HEK293T (cell line): ENCODE measurements at regions of chr11 and their contacts with region 1.

Region 1: DNA sequence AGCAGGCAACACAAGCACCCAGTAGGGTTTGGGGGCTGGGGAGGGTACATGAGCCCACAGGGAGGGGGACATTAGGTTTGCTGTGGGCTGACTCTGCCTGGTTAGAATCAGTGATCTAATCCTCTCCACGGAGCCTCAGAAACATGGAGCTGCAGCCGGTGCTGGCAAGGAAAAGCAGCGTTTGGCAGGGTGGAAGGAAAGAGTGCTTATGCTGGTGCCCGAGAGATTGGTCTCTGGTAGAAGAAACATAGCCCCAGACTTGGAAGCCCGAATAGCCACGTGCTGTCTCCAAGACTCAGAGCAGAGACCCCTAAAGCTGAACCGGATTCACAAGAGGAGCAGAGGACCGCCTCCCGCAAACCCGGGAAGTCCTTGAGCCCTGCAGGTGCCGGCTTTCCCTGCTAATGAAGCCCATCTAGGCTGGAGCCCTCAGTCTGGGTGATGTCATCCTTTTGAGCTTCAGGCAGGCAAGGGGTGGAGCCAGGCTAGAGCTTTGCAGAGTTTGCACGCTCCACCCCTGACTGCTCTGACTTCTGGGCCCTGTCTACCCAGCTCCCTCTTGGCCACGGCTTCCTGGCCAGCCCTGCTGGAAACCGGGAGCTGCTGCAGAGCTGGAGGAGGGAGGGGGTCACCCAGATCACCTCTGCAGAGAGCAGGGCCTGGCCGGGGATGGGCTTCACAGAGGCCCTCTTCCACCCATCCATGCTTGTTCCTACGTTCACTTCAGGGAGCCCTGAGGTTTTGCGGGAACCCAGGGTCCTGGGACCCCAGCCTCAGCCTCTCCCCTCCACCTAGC is 35.0 kb upstream of the JAM3 start:
- DNase-seq: peak; percentile 86

Region 2: DNA sequence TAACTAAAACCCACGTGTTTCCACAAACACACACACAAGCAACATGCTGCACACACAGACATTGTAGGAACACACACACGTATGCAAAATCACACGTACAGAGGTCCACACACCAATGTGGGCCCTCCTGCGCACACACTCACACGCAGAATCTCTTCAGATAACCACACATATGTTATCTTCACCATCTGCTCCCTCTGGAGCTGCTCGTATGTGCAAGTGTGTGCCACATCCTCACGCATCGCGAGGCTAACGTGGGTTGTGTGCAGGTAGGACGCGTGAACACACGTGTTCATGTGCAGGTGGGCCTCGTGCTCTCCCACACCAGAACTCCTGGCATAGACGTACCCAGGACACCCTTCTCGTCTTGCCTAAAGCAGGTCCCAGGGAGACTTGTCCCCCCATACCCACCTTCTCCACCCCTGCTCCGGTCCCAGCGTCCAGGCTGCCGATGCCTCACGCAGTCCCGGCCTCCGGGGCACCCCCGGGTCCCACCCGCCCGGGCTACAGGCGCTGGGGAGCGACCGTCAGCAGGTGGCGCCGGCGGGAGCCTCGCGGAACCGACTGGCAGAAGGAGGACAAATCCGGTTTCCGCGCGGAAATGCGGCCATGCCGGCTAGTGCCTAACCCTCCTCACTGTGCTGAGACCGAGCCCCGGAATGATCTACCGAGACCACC is 66.8 kb before region 1 on chr11:
- CTCF ChIA-PET with region 1: no interaction called
- POLR2A ChIA-PET with region 1: no interaction called
- DNase-seq: no peak

Region 3: DNA sequence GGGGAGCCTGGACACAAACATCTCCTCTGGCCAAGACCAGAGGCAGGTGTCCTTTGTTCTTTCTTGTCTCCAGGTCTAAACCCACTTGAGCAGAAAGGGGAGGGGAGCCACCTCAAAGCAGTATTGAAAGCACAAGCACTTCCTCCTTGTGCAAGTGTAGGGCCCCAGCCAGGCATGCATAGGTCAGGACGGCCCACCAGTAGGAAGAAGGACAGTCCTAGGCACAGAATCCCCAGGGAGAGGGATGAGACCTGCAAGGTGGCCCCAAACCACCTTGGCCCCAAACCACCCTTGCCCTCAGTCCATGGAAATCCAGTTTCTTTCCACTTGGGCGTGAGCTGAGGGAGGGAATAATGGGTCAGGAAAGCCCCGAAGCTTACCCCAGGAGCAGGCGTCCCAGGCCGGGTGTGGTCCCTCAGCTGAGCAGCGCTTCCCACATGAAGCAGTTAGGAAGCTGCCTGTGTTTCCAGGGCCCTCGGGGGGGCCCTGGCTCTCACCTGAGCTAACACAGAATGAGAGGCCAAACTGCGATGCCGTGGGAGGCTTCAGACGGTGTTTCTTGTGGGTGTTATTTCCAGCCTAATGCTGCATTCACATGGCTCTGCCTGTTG is 56.7 kb before region 1 on chr11:
- CTCF ChIA-PET with region 1: no interaction called
- POLR2A ChIA-PET with region 1: no interaction called
- DNase-seq: no peak

Region 4: DNA sequence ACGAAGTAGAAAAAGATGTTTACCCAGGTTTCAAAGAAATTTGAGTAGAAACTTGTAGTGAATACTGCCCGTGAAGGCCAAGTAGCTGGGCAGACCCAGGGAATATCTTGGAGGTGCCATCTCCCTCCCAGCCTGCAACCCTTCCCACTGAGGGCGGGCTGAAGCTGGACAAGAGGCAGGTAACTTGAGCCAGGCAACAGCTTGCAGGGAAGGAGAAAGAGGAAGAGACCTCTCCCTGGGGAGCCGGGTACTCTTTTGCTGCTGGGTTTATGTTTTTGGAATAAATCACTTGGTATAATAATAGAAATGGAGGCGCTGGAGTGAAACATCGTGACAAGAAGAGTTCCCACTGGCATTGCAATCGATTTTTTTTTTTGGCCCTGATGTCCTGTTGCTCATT is 14.4 kb before region 1 on chr11:
- CTCF ChIA-PET with region 1: interaction called, 21 read pairs
- POLR2A ChIA-PET with region 1: interaction called, 18 read pairs
- DNase-seq: no peak